Activated naive CD4-positive, alpha-beta T cell treated with anti-CD3 and anti-CD28 coated beads, Interleukin-2, amount 10 ng/mL, durations not matched to agents 7 days and 5 days (primary cell): ENCODE measurements at regions of chr5 and their contacts with region 1.

Region 1: DNA sequence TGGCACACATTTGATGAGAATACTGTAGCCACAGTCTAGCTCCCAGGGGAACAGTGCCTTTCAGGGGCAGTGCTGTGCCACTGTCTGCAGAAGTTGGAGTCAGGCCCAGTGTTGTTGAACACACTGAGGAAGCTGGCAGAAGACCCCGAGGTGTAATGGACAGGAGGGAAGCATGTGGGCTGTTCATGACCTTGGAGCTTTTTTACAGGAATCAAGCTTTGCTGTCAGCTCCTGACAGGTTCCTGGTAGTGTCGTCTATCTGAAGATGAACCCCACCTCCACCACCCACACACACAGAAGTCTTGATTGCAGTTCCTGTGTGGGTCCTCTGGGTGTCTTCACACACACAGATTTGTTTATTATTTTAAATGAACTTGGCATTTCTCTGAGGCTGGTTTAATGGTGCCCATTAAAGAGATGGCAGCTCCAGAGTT is 40.3 kb upstream of the TNFAIP8 start:
- DNase-seq: peak; percentile 67
- H3K4me3 Mint-ChIP-seq: peak overlapping the region; percentile 26
- H3K27ac Mint-ChIP-seq: peak overlapping the region; percentile 84
- H3K4me1 Mint-ChIP-seq: peaks cover 97% of the 10 kb centered on the region
- H3K27me3 Mint-ChIP-seq: no peaks in the 10 kb centered on the region

Region 2: GRCh38 chr5:119269061-119269588 is 46.4 kb before region 1 on chr5:
- CTCF ChIA-PET with region 1: interaction called, 10 read pairs
- DNase-seq: peak; percentile 50
- H3K4me3 Mint-ChIP-seq: peak overlapping the region; percentile 99
- H3K27ac Mint-ChIP-seq: peak overlapping the region; percentile 96
- H3K4me1 Mint-ChIP-seq: peaks cover 60% of the 10 kb centered on the region
- H3K27me3 Mint-ChIP-seq: no peaks in the 10 kb centered on the region

Region 3: DNA sequence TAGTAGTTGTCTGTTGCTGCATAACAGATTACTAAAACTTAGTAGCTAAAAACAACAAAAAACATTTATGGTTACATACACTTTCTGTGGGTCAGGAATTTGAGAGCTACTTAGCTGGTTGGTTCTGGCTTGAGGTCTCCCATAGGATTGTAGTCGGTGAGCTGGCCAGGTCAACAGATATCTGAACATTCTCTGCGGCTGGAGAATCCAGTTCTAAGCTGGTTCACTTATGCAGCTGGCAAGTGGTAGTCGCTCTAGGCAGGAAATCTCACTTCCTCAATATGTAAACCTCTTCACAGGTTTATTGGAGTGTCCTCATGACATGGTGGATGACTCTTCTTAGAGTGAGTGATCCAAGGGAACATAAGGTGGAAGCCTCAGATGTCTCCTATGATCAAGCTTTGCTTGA is 25.4 kb before region 1 on chr5:
- CTCF ChIA-PET with region 1: interaction called, 15 read pairs
- DNase-seq: no peak
- H3K4me3 Mint-ChIP-seq: peak overlapping the region; percentile 55
- H3K27ac Mint-ChIP-seq: peak overlapping the region; percentile 98
- H3K4me1 Mint-ChIP-seq: peaks cover 90% of the 10 kb centered on the region
- H3K27me3 Mint-ChIP-seq: no peaks in the 10 kb centered on the region

Region 4: GRCh38 chr5:119328753-119329602 is 13.4 kb after region 1 on chr5:
- CTCF ChIA-PET with region 1: interaction called, 121 read pairs
- DNase-seq: peak; percentile 68
- H3K4me3 Mint-ChIP-seq: peak overlapping the region; percentile 28
- H3K27ac Mint-ChIP-seq: peak overlapping the region; percentile 95
- H3K4me1 Mint-ChIP-seq: peaks cover 85% of the 10 kb centered on the region
- H3K27me3 Mint-ChIP-seq: no peaks in the 10 kb centered on the region

Region 5: GRCh38 chr5:119340597-119341218 is 25.2 kb after region 1 on chr5:
- CTCF ChIA-PET with region 1: interaction called, 121 read pairs
- DNase-seq: peak; percentile 84
- H3K4me3 Mint-ChIP-seq: peak overlapping the region; percentile 82
- H3K27ac Mint-ChIP-seq: peak overlapping the region; percentile 92
- H3K4me1 Mint-ChIP-seq: peaks cover 95% of the 10 kb centered on the region
- H3K27me3 Mint-ChIP-seq: no peaks in the 10 kb centered on the region

Region 6: GRCh38 chr5:119360905-119361593 is 45.5 kb after region 1 on chr5:
- CTCF ChIA-PET with region 1: interaction called, 18 read pairs
- DNase-seq: no peak
- H3K4me3 Mint-ChIP-seq: no peak overlapping the region
- H3K27ac Mint-ChIP-seq: peak overlapping the region; percentile 54
- H3K4me1 Mint-ChIP-seq: peaks cover 97% of the 10 kb centered on the region
- H3K27me3 Mint-ChIP-seq: no peaks in the 10 kb centered on the region